ENCODE measurements at regions of chr3 and their contacts with region 1.

Region 1: DNA sequence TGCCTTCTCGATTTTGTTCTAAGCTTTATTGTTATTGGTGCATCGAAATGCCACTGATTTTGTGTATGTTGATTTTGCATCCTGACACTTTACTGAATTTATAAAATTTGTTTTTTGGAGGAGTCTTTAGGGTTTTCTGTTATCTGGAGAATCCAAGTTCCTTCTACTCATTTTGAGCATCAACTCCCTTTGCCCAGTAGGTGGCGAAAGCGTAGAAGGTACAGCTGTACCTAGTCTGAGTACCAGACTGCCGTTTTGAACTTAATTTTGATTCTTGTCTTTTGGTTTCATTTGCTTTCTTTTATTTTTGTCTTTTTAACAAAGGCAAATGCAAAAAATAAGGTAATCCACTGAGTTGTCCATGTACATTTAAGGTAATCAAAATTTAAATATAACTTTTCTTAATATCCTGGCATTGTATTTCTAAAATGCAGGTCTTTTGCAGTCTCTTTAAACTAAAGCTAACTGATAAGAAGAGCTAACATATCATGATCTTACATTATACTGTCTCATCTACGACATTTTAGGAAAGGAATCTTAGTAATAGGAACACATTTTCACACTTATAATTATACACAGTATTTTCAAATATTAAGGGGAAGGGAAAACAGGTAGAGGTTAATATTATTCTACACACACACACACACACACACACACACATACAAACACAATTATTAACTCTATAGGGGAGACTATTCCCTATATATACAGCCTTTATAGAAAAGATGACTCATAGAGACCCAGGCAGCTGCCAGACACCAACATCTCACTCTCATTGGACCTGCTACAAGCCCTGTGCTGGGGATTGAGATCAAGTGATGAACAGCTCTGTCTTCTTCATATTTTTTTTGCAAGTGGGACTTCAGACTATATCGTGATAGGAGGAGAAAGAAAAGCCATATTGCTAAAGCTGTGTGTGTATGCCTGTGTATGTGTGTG is 71.7 kb downstream of the SYNPR start:
- DNase-seq: peak in 2 of 5 donors; percentile 25 to 29
- ATAC-seq: peak in 2 of 4 donors; percentile 51 to 69
- H3K4me3 ChIP-seq: no peak overlapping the region
- H3K27ac ChIP-seq: no peak overlapping the region
- H3K4me1 ChIP-seq: no peaks in the 10 kb centered on the region
- H3K27me3 ChIP-seq: peaks cover 0 to 19% (median 3%) of the 10 kb centered on the region in 9 donors
- CTCF ChIP-seq: peak; percentile 49 to 78 (median 64)
- POLR2A ChIP-seq: no peak

Region 2: GRCh38 chr3:63128380-63128779 is 221.5 kb before region 1 on chr3:
- intact Hi-C with region 1: no loop called
- DNase-seq: no peak
- ATAC-seq: no peak
- H3K4me3 ChIP-seq: no peak overlapping the region
- H3K27ac ChIP-seq: no peak overlapping the region
- H3K4me1 ChIP-seq: peaks cover 0 to 7% (median 0%) of the 10 kb centered on the region in 12 donors
- H3K27me3 ChIP-seq: no peaks in the 10 kb centered on the region
- CTCF ChIP-seq: no peak
- POLR2A ChIP-seq: no peak

Region 3: DNA sequence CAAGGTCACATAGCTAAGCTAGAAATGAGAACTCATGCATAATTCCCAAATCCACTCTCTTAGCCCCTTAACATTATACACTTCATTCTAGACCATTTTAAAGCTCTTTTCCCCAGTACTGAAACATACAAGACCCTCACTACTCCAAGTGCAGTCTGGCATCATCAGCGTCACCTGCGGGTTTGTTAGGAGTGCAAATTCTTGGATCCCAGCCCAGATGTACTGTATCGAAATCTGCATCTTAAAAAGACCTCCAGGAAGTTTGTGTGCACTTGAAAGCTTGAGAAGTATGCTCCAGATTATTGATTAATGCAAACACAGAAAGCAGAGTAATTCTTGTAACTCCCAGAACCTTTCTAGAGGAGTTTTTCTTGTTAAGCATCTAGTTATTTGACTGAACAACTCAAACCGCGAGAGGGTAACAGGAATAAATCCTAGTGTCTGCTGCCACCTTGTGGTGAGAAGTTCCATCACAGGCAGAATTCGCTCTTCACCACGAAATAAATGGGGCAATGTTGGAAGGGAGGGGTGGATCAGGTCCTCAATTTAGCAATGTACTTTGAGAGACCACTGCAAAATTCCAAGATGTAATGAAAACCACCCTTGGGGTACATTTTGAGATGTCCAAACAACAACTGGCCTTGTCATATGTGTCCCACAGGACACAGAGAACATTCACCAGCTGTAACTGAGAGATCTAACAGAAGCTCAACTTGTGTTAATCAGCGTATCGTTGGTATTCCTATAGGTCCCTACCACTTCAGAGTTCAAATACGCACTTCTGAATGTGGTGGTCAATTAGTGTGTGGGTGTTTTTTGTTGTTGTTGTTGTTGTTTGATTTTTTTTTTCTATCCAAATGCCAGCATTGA is 468.7 kb after region 1 on chr3:
- intact Hi-C with region 1: loop called (anchors 1 to 2 kb)
- DNase-seq: peak in 4 of 5 donors; percentile 29 to 59 (median 33)
- ATAC-seq: peak in 3 of 4 donors; percentile 46 to 62 (median 49)
- H3K4me3 ChIP-seq: no peak overlapping the region
- H3K27ac ChIP-seq: no peak overlapping the region
- H3K4me1 ChIP-seq: peaks cover 0 to 3% (median 0%) of the 10 kb centered on the region in 12 donors
- H3K27me3 ChIP-seq: no peaks in the 10 kb centered on the region
- CTCF ChIP-seq: peak; percentile 80 to 93 (median 84)
- POLR2A ChIP-seq: no peak

Region 4: DNA sequence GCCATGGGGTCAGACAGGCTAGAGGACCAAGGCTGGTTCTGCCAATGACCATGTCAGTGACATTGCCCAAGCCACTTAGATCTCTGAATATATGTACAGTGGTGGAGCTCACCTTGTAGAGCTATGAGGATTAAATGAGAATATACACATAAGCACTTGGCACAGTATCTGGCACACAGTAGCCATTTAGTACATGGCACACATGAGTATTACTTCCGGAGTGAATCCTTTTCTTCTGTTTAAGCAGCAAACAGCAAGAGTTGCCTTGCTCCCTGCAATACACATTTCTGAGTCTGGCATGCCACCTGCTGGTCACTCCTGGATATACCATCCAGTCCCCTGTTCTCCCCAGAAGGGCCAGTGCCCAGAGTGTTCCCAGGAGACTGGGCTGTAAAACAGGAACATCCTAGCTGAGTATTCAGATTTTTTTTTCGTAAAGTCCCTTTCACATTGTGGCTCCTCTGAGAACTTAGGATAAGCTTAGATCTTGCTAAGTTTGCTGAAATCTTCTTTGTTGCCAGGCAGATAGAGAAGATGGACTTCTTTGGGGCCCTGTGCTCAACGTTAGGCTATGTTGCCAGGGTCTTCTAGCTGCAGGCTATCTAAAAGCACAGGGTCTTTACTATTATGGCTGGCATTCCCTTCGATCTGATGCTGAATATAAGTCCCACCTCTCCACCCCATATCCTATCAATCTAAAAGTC is 1134.6 kb after region 1 on chr3:
- intact Hi-C with region 1: loop called in 1 of 10 experiments (anchors 10 kb)
- DNase-seq: peak; percentile 67 to 82 (median 70)
- ATAC-seq: peak; percentile 83 to 94 (median 94)
- H3K4me3 ChIP-seq: no peak overlapping the region
- H3K27ac ChIP-seq: no peak overlapping the region
- H3K4me1 ChIP-seq: peaks cover 0 to 13% (median 1%) of the 10 kb centered on the region in 12 donors
- H3K27me3 ChIP-seq: peaks cover 0 to 2% (median 0%) of the 10 kb centered on the region in 9 donors
- CTCF ChIP-seq: peak; percentile 76 to 95 (median 88)
- POLR2A ChIP-seq: no peak